Sigmoid colon (tissue), 7 donors: ENCODE measurements at regions of chr12 and their contacts with region 1.

Region 1: GRCh38 chr12:101407436-101408345 is at the start of gene ARL1:
- DNase-seq: peak; percentile 91
- H3K4me3 ChIP-seq: peak within 1 kb of the TSS; percentile 69 to 81 (median 76)
- H3K27ac ChIP-seq: peak within 1 kb of the TSS; percentile 82 to 96 (median 88)
- H3K4me1 ChIP-seq: peaks cover 0 to 27% (median 20%) of the 10 kb centered on the region in 4 donors
- H3K27me3 ChIP-seq: no peaks in the 10 kb centered on the region
- CTCF ChIP-seq: no peak
- EP300 ChIP-seq: no peak
- POLR2A ChIP-seq: peak; percentile 33 to 43
- total RNA-seq, gene ARL1: 49.3 to 72.2 (median 70.3) TPM

Region 2: DNA sequence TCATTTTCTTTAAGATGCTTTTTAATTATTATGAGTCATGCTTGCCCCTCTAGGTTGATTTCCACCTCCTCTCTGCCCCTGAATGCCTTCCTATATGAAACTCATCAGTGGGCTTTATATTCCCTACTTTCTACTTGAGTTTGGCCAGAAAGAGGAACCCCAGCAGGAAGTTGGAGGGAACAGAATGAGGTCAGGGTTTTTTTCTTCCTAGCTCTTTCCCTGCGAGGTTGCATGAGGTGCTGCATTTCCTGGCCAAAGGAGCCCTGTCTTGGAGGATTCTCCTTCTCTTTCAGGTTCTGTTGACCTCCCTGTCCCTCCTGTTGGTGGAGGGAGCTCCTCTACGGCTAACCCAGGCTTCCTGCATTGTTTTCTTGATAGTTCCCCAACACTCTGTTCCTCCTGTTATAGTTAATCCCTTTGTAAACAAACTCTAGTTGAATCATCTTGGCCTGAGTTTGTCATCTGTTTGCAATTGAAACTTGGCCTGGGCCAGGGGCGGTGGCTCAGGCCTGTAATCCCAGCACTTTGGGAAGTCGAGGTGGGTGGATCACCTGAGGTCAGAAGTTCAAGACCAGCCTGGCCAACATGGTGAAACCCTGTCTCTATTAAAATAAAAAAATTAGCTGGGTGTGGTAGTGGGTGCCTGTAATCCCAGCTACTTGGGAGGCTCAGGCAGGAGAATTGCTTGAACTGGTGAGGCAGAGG is 52.1 kb after region 1 on chr12:
- intact Hi-C with region 1: no loop called
- DNase-seq: no peak
- H3K4me3 ChIP-seq: no peak overlapping the region
- H3K27ac ChIP-seq: peak overlapping the region in 1 of 4 donors; percentile 62
- H3K4me1 ChIP-seq: no peaks in the 10 kb centered on the region
- H3K27me3 ChIP-seq: no peaks in the 10 kb centered on the region
- CTCF ChIP-seq: no peak
- EP300 ChIP-seq: no peak
- POLR2A ChIP-seq: no peak

Region 3: DNA sequence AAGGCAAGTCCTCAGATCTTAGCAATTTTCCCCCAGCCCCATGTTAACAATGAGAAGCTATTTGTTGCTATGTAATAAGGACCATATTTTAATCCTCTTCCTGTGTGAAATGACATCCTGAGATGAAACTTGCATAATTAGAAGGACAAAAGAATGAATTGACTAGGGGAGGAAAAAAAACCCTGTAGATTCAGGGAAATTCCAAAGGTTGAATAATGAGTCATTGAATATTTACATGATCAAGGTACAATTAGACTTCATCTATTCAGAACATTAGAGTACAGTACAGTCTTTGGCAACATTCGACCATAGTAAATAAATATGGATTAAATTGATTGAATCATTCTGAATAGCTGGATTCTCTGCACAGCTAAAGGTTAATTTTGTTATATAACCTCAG is 196.4 kb after region 1 on chr12:
- intact Hi-C with region 1: no loop called
- DNase-seq: no peak
- H3K4me3 ChIP-seq: no peak overlapping the region
- H3K27ac ChIP-seq: no peak overlapping the region
- H3K4me1 ChIP-seq: no peaks in the 10 kb centered on the region
- H3K27me3 ChIP-seq: no peaks in the 10 kb centered on the region
- CTCF ChIP-seq: no peak
- EP300 ChIP-seq: no peak
- POLR2A ChIP-seq: no peak

Region 4: DNA sequence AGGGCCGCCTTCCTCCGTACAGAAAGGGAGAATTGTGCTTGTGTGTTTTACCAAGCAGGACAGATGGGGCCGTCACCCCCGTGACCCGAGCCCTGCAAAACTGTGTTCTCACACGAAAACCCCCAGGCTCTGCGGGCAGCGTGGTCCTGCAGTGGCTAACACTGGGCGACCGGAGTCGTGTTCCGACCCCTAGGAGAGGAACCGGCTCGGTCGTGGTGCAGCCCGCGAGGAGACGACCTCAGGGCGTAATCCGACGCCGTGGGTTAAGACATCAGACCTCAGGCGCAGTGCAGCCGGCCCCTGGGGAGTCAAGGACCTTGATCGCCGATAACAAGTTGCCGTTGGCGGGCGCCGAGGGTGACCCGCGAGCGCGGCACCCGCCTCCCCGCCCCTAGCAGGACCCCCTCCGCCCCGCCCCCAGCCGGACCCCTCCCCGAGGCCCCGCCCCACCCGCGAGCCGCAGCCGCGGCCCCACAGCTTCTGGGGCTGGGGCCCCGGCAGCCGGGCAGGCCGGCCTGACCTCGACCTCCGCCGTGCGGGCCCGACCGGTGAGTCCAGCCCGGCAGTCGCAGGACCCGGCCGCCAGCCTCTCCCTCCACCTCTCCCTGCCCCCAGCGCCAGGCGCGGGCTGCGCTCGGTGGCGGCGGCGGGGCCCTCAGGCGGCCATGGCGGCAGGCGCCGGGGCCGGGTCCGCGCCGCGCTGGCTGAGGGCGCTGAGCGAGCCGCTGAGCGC is 289.7 kb after region 1 on chr12 and contains the start of gene CHPT1:
- intact Hi-C with region 1: loop called (anchors 5 kb)
- DNase-seq: peak; percentile 83
- H3K4me3 ChIP-seq: peak within 1 kb of the TSS; percentile 58 to 94 (median 94)
- H3K27ac ChIP-seq: peak within 1 kb of the TSS; percentile 89 to 96 (median 95)
- H3K4me1 ChIP-seq: peaks cover 0 to 54% (median 41%) of the 10 kb centered on the region in 4 donors
- H3K27me3 ChIP-seq: no peaks in the 10 kb centered on the region
- CTCF ChIP-seq: no peak
- EP300 ChIP-seq: no peak
- POLR2A ChIP-seq: no peak
- total RNA-seq, gene CHPT1: 49.9 to 118 (median 80.4) TPM

Region 5: GRCh38 chr12:101876861-101877815 is 469.4 kb after region 1 on chr12 and contains the start of gene DRAM1:
- intact Hi-C with region 1: loop called (anchors 1 kb)
- DNase-seq: peak; percentile 96
- H3K4me3 ChIP-seq: peak within 1 kb of the TSS; percentile 76 to 98 (median 86)
- H3K27ac ChIP-seq: peak within 1 kb of the TSS; percentile 92 to 99 (median 98)
- H3K4me1 ChIP-seq: peaks cover 0 to 18% (median 9%) of the 10 kb centered on the region in 4 donors
- H3K27me3 ChIP-seq: no peaks in the 10 kb centered on the region
- CTCF ChIP-seq: no peak
- EP300 ChIP-seq: peak in 1 of 4 donors; percentile 43
- POLR2A ChIP-seq: peak; percentile 71 to 88
- total RNA-seq, gene DRAM1: 13.3 to 21.6 (median 18.1) TPM